ENCODE measurements at regions of chr17 and their contacts with region 1.

Region 1: DNA sequence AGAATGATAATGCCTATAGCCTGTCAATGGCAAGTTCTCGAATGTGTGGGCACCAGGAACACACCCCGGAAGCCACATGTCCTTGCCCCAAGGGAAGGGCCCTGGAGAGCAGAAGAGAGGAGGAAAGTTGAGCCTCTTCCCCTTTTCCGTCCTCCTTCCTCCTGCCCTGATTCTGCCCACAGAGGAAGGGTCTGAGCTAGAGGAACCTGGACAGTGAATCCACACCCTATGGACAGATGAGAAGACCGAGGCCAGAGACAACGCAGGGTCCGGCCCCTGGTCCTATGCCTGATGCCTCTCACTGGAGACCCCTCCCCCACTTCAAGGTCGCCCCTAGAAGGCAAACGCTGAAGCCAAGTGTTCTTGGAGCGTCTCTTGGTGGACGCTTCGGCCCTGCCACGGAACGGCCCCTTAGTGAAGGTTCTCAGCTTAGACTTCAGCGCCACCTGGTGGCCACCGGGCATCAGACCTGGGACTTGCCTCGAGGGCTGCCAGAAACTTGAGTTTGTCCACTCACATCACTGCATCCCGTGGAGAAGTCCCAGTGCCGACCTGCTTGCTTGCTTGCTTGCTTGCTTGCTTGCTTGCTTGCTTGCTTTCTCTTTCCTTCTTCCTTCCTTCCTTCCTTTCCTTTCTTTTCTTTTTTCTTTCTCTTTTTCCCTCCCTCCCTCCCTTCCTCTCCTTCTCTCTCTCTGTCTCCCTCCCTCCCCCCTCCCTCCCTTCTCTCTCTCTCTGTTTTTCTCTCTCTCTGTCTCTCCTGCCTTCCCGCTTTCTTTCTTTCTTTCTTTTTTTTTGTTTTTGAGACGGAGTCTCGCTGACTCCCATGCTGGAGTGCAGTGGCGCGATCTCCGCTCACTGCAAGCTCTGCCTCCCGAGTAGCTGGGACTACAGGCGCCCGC is 20.6 kb upstream of the SPNS3 start:
- DNase-seq: peak; percentile 97
- H3K4me3 Mint-ChIP-seq: peak overlapping the region; percentile 76
- H3K27ac Mint-ChIP-seq: peak overlapping the region; percentile 79
- H3K4me1 Mint-ChIP-seq: peaks cover 5% of the 10 kb centered on the region
- H3K27me3 Mint-ChIP-seq: peaks cover 2% of the 10 kb centered on the region

Region 2: DNA sequence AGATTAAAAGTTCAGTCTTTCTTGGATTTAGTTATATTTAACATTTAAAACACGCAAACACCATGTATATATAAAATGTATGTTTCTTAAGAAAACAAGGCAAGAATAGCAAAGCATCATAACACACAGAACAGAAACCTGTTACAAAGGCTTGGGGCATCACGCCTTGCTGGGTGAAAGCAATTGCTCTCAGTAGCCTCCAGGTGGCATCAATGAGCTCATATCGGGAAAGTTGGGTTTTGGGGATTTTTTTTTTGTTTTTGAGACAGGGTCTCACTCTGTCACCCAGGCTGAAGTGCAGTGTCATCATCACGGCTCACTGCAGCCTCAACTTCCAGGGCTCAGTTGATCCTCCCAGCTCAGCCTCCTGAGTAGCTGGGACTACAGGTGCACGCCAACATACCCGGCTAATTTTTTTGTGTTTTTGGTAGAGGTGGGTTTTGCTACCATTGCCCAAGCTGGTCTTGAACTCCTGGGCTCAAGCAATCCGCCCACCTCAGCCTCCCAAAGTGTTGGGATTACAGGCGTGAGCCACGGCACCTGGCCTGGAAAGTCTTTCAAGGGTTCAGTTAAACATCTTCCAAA is 213.3 kb before region 1 on chr17:
- intact Hi-C with region 1: loop called (anchors 1 kb)
- DNase-seq: peak; percentile 81
- H3K4me3 Mint-ChIP-seq: no peak overlapping the region
- H3K27ac Mint-ChIP-seq: no peak overlapping the region
- H3K4me1 Mint-ChIP-seq: peaks cover 9% of the 10 kb centered on the region
- H3K27me3 Mint-ChIP-seq: no peaks in the 10 kb centered on the region

Region 3: GRCh38 chr17:4215882-4216570 is 197.2 kb before region 1 on chr17:
- intact Hi-C with region 1: loop called (anchors 1 kb)
- DNase-seq: no peak
- H3K4me3 Mint-ChIP-seq: no peak overlapping the region
- H3K27ac Mint-ChIP-seq: peak overlapping the region; percentile 35
- H3K4me1 Mint-ChIP-seq: peaks cover 9% of the 10 kb centered on the region
- H3K27me3 Mint-ChIP-seq: no peaks in the 10 kb centered on the region

Region 4: DNA sequence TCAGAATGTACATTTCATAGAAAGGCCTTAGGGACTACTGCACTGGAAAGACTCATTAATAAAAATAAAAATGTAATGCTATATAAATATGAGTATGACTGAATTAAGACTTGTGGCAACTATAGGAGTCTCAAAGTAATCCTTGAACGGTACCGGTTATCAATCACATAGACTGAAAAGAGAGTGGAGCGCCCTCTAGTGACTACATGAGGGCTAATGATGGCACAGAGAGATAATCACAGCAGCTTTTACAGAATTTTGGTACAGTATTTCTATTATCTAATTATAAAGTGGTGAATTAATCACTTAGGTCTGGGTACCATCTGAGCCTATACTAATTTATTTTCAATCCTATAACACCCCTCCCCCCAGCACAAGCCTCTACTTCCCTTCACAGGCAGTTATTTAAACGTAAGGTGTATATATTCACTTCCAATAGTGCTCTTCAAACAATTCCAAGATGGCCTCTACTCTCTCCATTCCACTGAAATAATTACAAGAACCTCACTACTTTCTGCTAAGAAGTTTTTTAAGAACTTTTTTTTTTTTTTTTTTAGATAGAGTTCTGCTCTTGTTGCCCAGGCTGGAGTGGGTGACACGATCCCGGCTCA is 108.7 kb before region 1 on chr17:
- intact Hi-C with region 1: loop called (anchors 10 kb)
- DNase-seq: peak; percentile 88
- H3K4me3 Mint-ChIP-seq: no peak overlapping the region
- H3K27ac Mint-ChIP-seq: peak overlapping the region; percentile 4
- H3K4me1 Mint-ChIP-seq: peaks cover 9% of the 10 kb centered on the region
- H3K27me3 Mint-ChIP-seq: no peaks in the 10 kb centered on the region

Region 5: DNA sequence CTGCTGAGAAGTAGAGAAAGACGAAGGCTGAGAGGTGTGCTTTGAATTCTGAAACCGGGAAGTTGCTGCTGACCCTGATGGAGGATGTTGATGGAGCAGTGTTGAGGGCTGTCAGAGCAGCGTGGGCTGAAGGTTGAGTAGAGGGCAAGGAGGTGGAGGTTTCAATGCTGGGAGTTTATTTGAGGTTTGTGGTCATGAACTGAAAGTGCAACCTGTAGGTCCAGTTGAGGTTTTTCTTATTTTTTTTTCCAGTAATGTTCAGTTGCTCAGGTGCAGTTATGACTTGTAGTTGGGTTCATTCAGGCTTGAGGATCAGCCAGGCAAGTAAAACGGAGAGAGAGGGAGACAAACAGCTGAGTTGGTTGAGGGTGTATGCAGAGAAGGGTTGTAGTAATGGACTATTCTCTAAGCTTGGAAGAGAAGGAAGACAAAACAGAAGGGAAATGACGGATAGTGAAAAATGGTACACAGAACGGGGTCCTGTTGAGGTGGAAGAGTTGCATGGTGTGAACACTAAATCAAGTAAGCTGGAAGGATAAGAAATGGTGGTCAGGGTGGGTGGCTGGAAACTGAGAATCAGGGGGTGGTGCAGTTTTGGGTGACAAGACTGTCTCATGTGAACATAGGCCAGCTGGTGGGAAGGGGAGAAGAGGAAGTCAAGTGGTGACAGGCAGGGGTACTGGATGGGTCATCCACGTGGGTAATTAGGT is 38.0 kb before region 1 on chr17:
- intact Hi-C with region 1: loop called (anchors 2 kb)
- DNase-seq: peak; percentile 88
- H3K4me3 Mint-ChIP-seq: peak overlapping the region; percentile 62
- H3K27ac Mint-ChIP-seq: peak overlapping the region; percentile 90
- H3K4me1 Mint-ChIP-seq: peaks cover 29% of the 10 kb centered on the region
- H3K27me3 Mint-ChIP-seq: no peaks in the 10 kb centered on the region

Region 6: GRCh38 chr17:4806777-4807604 is 393.8 kb after region 1 on chr17 and contains the start of gene PLD2:
- intact Hi-C with region 1: no loop called
- DNase-seq: peak; percentile 97
- H3K4me3 Mint-ChIP-seq: peak within 1 kb of the TSS; percentile 82
- H3K27ac Mint-ChIP-seq: peak within 1 kb of the TSS; percentile 82
- H3K4me1 Mint-ChIP-seq: peaks cover 10% of the 10 kb centered on the region
- H3K27me3 Mint-ChIP-seq: no peaks in the 10 kb centered on the region
- total RNA-seq, gene PLD2: 14.5 and 16.1 TPM in 2 replicates